ENCODE measurements at regions of chr6 and their contacts with region 1.

Region 1: DNA sequence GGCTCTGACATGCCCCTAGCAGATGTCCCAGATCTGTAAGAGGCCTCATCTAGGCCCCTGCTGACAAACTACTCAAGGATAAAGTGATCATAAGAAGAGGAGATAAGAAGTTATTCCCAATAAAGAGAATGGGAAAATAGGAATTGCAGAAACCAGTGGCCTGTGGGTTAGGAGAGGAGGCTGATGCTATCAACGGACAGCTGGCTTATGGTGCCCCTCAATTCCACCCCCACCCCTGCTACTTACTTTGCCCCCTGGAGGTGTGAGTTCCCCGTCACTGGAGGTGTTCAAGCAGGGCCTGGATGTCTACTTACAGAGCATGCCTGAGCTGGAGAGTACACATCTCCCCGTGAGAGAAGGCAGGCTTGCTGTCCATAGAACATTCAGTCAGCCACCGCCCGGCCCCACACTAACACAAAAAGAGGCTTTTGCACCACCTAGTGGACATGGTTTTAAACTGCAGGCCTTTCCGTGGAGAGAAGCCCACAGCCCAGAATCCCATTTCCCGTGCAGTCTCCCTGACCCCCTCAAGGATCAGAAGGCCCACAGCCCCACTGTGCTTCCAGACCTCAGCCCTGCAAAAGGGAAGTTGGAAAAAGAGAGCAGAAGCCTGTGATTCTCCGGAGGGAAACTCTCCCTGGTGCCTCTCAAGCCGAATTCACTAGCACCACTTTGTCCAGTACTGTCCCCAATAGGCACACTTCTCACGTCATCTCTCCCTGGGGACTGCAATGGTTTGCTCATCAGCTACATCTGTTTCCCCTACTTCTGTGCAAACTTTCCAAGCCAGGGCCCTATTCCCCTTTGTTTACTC is 23.8 kb upstream of the BNIP5 start:
- DNase-seq: peak; percentile 89
- H3K4me3 ChIP-seq: no peak overlapping the region
- H3K27ac ChIP-seq: no peak overlapping the region
- H3K4me1 ChIP-seq: peaks cover 8% of the 10 kb centered on the region
- H3K27me3 ChIP-seq: no peaks in the 10 kb centered on the region

Region 2: GRCh38 chr6:36123257-36124139 is 236.9 kb before region 1 on chr6:
- in situ Hi-C with region 1: loop called (anchors 10 kb)
- DNase-seq: peak; percentile 85
- H3K4me3 ChIP-seq: no peak overlapping the region
- H3K27ac ChIP-seq: no peak overlapping the region
- H3K4me1 ChIP-seq: peaks cover 31% of the 10 kb centered on the region
- H3K27me3 ChIP-seq: no peaks in the 10 kb centered on the region

Region 3: GRCh38 chr6:36724514-36725390 is 364.3 kb after region 1 on chr6:
- in situ Hi-C with region 1: no loop called
- DNase-seq: peak; percentile 75
- H3K4me3 ChIP-seq: no peak overlapping the region
- H3K27ac ChIP-seq: no peak overlapping the region
- H3K4me1 ChIP-seq: peaks cover 14% of the 10 kb centered on the region; the same call in 1 of the 2 replicates
- H3K27me3 ChIP-seq: no peaks in the 10 kb centered on the region

Measured in GM23248 (cell line).